ENCODE measurements at regions of chr18 and their contacts with region 1.

Region 1: GRCh38 chr18:63422087-63422809 is at the start of gene VPS4B:
- DNase-seq: peak; percentile 97 to 100
- H3K4me3 ChIP-seq: peak within 1 kb of the TSS; percentile 94 to 99
- H3K27ac ChIP-seq: peak within 1 kb of the TSS; percentile 92 to 93
- H3K4me1 ChIP-seq: peaks cover 0 to 10% of the 10 kb centered on the region in 2 donors
- H3K27me3 ChIP-seq: no peaks in the 10 kb centered on the region
- CTCF ChIP-seq: no peak
- total RNA-seq, gene VPS4B: 16.7 TPM

Region 2: GRCh38 chr18:62437235-62438017 is 984.8 kb before region 1 on chr18:
- intact Hi-C with region 1: loop called (anchors 5 kb)
- DNase-seq: peak; percentile 86 to 98
- H3K4me3 ChIP-seq: peak overlapping the region; percentile 39 to 52
- H3K27ac ChIP-seq: peak overlapping the region; percentile 85 to 94
- H3K4me1 ChIP-seq: peaks cover 4 to 19% of the 10 kb centered on the region in 2 donors
- H3K27me3 ChIP-seq: no peaks in the 10 kb centered on the region
- CTCF ChIP-seq: no peak

Region 3: DNA sequence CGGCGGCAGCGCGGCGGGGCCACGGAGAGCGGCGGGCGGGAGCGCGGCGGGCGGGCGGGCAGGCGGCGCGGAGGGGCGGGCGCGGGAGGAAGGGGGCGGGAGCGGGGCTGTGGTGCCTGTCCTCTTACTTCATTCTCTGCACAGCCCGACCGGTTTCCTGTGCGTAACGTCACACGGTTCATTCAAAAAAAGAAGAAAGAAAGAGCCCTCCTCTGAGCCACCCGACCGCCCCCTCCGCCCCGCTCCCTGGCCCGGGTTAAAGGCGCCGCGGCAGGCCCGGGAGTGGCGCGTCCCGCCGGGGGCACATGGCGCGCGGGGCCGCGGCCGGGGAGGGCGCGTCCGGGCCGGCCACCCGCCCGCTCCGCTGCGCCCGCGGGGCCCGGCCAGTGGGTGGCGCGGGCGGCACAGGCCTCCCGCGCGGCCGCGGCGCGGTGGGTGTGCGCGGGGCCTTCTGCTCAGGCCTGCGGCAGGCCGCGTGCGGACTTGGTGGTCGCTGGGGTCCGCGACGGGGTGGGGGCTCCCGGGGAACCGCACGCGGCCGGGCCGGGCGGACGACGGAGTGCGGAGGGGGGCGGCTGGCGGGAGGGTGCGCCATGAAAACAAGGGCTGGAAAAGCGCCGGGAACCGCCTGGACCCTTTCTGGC is 102.1 kb before region 1 on chr18:
- intact Hi-C with region 1: loop called (anchors 5 kb)
- DNase-seq: peak; percentile 66 to 94
- H3K4me3 ChIP-seq: peak overlapping the region; percentile 56 to 68
- H3K27ac ChIP-seq: peak overlapping the region; percentile 87 to 95
- H3K4me1 ChIP-seq: peaks cover 3 to 6% of the 10 kb centered on the region in 2 donors
- H3K27me3 ChIP-seq: no peaks in the 10 kb centered on the region
- CTCF ChIP-seq: peak in 1 of 3 experiments; percentile 31

Region 4: DNA sequence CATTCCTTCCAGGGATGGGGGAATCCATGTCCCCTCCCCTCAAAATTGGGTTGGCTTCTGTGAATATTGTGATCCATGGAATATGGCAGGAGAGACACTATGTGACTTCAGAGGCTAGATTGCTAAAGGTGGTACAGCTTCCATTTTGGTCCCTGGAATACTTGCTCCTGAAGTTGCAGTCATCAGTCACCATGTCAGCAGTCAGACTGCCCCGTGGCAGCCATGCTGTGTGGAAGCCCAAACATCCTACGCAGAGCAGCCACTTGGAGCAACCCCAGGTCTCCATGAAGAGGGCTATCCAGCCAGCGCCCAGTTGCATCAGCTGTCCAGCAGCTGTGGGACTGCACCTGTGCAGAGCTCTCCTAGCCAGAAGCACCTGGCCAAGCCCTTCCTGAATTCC is 39.4 kb before region 1 on chr18:
- intact Hi-C with region 1: no loop called
- DNase-seq: no peak
- H3K4me3 ChIP-seq: no peak overlapping the region
- H3K27ac ChIP-seq: no peak overlapping the region
- H3K4me1 ChIP-seq: no peaks in the 10 kb centered on the region
- H3K27me3 ChIP-seq: no peaks in the 10 kb centered on the region
- CTCF ChIP-seq: no peak

Region 5: DNA sequence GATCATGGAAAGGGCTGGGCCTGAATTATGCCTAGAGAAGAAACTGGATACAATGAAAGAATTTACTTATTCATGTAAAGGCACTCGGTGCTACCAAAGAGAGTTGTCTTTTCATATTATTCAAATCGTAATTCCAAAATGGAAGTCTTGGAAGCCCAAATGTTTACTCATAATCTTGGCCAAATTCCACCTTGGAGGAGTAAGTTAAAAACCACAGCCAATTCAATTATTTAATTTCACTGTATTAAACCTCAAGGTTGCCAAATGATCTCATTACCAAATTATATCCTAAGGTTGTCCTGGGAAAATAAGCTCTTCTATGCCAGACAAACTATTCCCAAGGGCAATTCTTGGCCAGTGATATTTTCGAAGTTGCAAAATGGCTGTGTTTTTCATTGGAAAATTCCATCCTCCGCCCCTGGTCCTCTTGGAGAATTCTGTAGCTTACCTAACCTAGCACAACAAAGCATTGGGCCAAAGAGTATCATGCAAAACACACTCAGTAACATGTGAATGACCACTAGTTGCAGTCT is 11.2 kb after region 1 on chr18:
- intact Hi-C with region 1: loop called (anchors 1 kb)
- DNase-seq: peak in 1 of 2 donors; percentile 71
- H3K4me3 ChIP-seq: no peak overlapping the region
- H3K27ac ChIP-seq: peak overlapping the region; percentile 44 to 77
- H3K4me1 ChIP-seq: peaks cover 4 to 9% of the 10 kb centered on the region in 2 donors
- H3K27me3 ChIP-seq: no peaks in the 10 kb centered on the region
- CTCF ChIP-seq: no peak

Region 6: GRCh38 chr18:63969960-63970802 is 547.9 kb after region 1 on chr18 and contains the start of gene SERPINB8:
- intact Hi-C with region 1: loop called (anchors 2 kb)
- DNase-seq: peak; percentile 76 to 98
- H3K4me3 ChIP-seq: peak within 1 kb of the TSS; percentile 77 to 80
- H3K27ac ChIP-seq: peak within 1 kb of the TSS; percentile 97 to 99
- H3K4me1 ChIP-seq: peaks cover 0 to 4% of the 10 kb centered on the region in 2 donors
- H3K27me3 ChIP-seq: no peaks in the 10 kb centered on the region
- CTCF ChIP-seq: no peak
- total RNA-seq, gene SERPINB8: 4.5 TPM

Measured in ascending aorta (tissue), 2 donors.